IMR-90 (cell line): ENCODE measurements at regions of chr2 and their contacts with region 1.

Region 1: GRCh38 chr2:233353769-233354499 is at the start of gene DGKD:
- DNase-seq: no peak
- ATAC-seq: peak; percentile 93
- H3K4me3 ChIP-seq: peak within 1 kb of the TSS; percentile 100
- H3K27ac ChIP-seq: peak within 1 kb of the TSS; percentile 86
- H3K4me1 ChIP-seq: peaks cover 8% of the 10 kb centered on the region
- H3K27me3 ChIP-seq: peaks cover 4% of the 10 kb centered on the region; the same call in 1 of the 2 replicates
- CTCF ChIP-seq: peak; percentile 34
- POLR2A ChIP-seq: no peak
- RAD21 ChIP-seq: no peak
- total RNA-seq, gene DGKD: 5.8 and 6.5 TPM in 2 replicates

Region 2: DNA sequence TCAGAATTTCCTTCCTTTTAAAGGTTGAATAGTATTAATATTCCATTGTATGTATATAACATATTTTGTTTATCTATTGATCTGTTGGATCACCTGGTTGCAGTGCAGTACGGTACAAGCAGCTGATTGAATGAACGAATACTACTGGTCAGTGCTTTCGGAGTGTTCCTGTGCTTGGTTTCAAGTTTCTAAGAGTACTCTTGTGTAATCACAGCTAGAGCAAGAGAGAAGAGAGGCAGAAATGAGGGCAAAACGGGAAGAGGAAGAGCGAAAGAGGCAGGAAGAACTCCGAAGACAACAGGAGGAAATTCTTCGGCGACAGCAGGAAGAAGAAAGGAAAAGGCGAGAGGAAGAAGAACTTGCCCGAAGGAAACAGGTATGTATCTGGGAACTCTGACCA is 537.3 kb before region 1 on chr2:
- CTCF ChIA-PET with region 1: no interaction called
- POLR2A ChIA-PET with region 1: no interaction called
- dilution Hi-C with region 1: no loop called
- in situ Hi-C with region 1: no loop called
- intact Hi-C with region 1: no loop called
- DNase-seq: no peak
- ATAC-seq: no peak
- H3K4me3 ChIP-seq: no peak overlapping the region
- H3K27ac ChIP-seq: no peak overlapping the region
- H3K4me1 ChIP-seq: peaks cover 2% of the 10 kb centered on the region; the same call in 1 of the 2 replicates
- H3K27me3 ChIP-seq: no peaks in the 10 kb centered on the region
- CTCF ChIP-seq: no peak
- POLR2A ChIP-seq: no peak
- RAD21 ChIP-seq: no peak

Region 3: DNA sequence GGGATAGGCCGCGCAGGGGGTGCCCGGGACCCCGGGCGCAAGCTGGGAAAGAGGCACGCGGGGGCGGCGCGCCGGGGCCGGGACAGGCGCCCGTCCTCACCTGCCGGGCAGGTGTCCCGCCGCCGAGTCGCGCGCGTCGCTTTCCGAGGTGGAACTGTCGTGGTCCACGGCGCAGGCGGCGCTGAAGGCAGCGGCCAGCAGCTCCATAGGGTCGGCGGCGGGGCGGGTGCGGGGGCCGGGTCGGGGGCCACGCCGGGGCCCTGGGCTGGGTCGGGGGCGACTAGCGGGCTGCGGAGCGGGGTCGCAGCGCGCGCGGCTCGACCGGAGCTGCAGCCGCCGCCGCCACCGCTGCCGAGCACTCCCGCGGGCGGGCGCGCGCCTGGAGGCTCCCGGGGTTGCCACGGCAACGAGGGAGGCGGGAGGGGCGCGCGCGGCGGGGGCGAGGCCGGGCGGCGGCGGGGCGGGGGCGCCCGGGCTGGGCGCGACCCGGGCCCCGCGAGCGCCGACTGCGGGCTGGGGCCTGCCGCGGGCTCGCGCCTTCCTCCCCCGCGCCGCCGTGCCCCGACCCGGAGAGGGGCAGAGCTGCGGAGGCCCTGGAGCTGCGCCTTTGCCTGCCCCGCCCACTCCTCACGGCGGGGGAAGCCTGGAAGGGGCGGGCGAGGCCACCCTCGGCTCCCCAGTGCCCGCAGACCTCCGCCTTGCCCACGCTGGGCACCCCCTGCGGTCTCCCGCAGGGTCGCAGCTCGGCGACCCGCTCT is 426.0 kb before region 1 on chr2:
- CTCF ChIA-PET with region 1: no interaction called
- POLR2A ChIA-PET with region 1: no interaction called
- dilution Hi-C with region 1: no loop called
- in situ Hi-C with region 1: no loop called
- intact Hi-C with region 1: no loop called
- DNase-seq: no peak
- ATAC-seq: peak; percentile 53
- H3K4me3 ChIP-seq: no peak overlapping the region
- H3K27ac ChIP-seq: no peak overlapping the region
- H3K4me1 ChIP-seq: no peaks in the 10 kb centered on the region; the same call in 1 of the 2 replicates
- H3K27me3 ChIP-seq: peaks cover 48% of the 10 kb centered on the region
- CTCF ChIP-seq: no peak
- POLR2A ChIP-seq: no peak
- RAD21 ChIP-seq: no peak

Region 4: DNA sequence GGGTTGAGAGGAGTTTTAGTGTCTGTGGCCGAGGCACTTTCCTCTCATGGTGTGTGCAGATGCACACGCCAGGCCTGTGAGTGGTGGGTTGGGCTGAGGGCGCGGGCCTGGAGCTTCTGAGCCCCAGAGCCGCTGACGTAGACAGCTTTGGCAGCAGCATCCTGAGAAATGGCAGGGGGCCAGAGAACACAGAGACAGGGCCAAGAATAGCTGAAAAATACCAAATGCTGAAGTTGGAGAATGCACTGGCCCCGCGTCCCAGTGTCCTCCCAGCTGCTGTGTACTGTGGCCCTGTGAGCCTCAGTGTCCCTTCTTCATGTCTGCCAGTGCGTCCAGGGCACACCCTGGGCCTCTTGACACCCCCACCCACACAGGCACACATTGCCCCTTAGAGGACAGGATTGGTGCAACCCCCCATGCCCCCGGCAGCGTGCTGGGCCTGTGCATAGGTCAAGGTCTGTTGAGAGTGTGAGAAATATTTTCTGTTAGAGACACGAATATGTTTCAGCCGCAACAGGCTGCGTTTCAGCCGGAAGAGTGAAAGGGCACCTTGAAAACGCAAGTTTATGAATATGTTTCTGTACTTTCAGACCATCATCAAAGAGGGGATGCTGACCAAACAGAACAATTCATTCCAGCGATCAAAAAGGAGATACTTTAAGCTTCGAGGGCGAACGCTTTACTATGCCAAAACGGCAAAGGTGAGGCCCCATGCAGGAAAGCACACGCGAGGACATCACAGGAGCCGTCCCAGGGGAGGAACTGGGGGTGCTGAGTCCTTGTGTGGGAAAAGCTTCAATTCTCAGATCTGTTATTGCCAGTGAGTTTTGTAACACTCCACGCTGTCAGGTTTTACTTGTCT is 34.0 kb after region 1 on chr2:
- CTCF ChIA-PET with region 1: no interaction called
- POLR2A ChIA-PET with region 1: no interaction called
- dilution Hi-C with region 1: no loop called
- in situ Hi-C with region 1: no loop called
- intact Hi-C with region 1: loop called (anchors 2 kb)
- DNase-seq: peak; percentile 96
- ATAC-seq: peak; percentile 91
- H3K4me3 ChIP-seq: 0 out of 2 replicates have a peak overlapping the region, but pooled peaks have one; percentile 2
- H3K27ac ChIP-seq: peak overlapping the region; percentile 85
- H3K4me1 ChIP-seq: peaks cover 24% of the 10 kb centered on the region
- H3K27me3 ChIP-seq: no peaks in the 10 kb centered on the region
- CTCF ChIP-seq: no peak
- POLR2A ChIP-seq: 0 out of 2 replicates have a peak, but pooled peaks have one; percentile 37
- RAD21 ChIP-seq: no peak; the same call in 1 of the 2 replicates

Region 5: GRCh38 chr2:233449081-233449901 is 95.4 kb after region 1 on chr2:
- CTCF ChIA-PET with region 1: interaction called, 9 read pairs
- POLR2A ChIA-PET with region 1: no interaction called
- dilution Hi-C with region 1: no loop called
- in situ Hi-C with region 1: loop called (anchors 5 kb)
- intact Hi-C with region 1: no loop called
- DNase-seq: peak; percentile 48
- ATAC-seq: peak; percentile 94
- H3K4me3 ChIP-seq: no peak overlapping the region
- H3K27ac ChIP-seq: no peak overlapping the region
- H3K4me1 ChIP-seq: no peaks in the 10 kb centered on the region
- H3K27me3 ChIP-seq: no peaks in the 10 kb centered on the region
- CTCF ChIP-seq: peak; percentile 82
- POLR2A ChIP-seq: no peak
- RAD21 ChIP-seq: peak; percentile 79